Activated CD8-positive, alpha-beta T cell treated with anti-CD3 and anti-CD28 coated beads, Interleukin-2, amount 10 ng/mL, durations not matched to agents 7 days and 5 days (primary cell): ENCODE measurements at regions of chr2 and their contacts with region 1.

Region 1: GRCh38 chr2:85635636-85636035 is 19.6 kb downstream of the USP39 start:
- DNase-seq: no peak
- ATAC-seq: no peak
- H3K4me3 Mint-ChIP-seq: no peak overlapping the region
- H3K27ac Mint-ChIP-seq: no peak overlapping the region
- H3K4me1 Mint-ChIP-seq: peaks cover 6% of the 10 kb centered on the region
- H3K27me3 Mint-ChIP-seq: no peaks in the 10 kb centered on the region

Region 2: GRCh38 chr2:85611705-85612587 is 23.7 kb before region 1 on chr2 and contains the start of gene C2orf68:
- CTCF ChIA-PET with region 1: interaction called, 22 read pairs
- POLR2A ChIA-PET with region 1: interaction called, 6 read pairs
- DNase-seq: peak; percentile 91
- ATAC-seq: peak; percentile 74
- H3K4me3 Mint-ChIP-seq: peak within 1 kb of the TSS; percentile 97
- H3K27ac Mint-ChIP-seq: peak within 1 kb of the TSS; percentile 94
- H3K4me1 Mint-ChIP-seq: peaks cover 35% of the 10 kb centered on the region
- H3K27me3 Mint-ChIP-seq: no peaks in the 10 kb centered on the region
- total RNA-seq, gene C2orf68: 38.9 to 43.4 TPM

Region 3: DNA sequence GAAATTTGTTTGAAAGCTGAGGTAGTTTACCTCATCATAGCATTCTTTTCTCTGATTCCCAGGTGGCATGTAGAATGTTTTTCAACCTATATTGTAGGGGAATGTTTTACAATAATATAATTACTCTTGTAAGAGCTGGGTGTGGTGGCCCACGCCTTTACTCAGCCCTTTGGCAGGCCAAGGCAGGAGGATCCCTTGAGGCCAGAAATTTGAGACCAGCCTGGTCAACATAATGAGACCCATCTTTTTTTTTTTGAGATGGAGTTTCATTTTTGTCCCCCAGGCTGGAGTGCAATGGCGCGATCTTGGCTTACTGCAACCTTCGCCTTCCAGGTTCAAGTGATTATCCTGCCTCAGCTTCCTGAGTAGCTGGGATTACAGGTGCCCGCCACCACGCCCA is 16.0 kb before region 1 on chr2:
- CTCF ChIA-PET with region 1: interaction called, 51 read pairs
- POLR2A ChIA-PET with region 1: interaction called, 6 read pairs
- DNase-seq: no peak
- ATAC-seq: no peak
- H3K4me3 Mint-ChIP-seq: no peak overlapping the region
- H3K27ac Mint-ChIP-seq: no peak overlapping the region
- H3K4me1 Mint-ChIP-seq: peaks cover 36% of the 10 kb centered on the region
- H3K27me3 Mint-ChIP-seq: no peaks in the 10 kb centered on the region

Region 4: GRCh38 chr2:85648619-85649018 is 13.0 kb after region 1 on chr2:
- CTCF ChIA-PET with region 1: interaction called, 86 read pairs
- POLR2A ChIA-PET with region 1: no interaction called
- DNase-seq: peak; percentile 51
- ATAC-seq: peak; percentile 75
- H3K4me3 Mint-ChIP-seq: no peak overlapping the region
- H3K27ac Mint-ChIP-seq: no peak overlapping the region
- H3K4me1 Mint-ChIP-seq: no peaks in the 10 kb centered on the region
- H3K27me3 Mint-ChIP-seq: no peaks in the 10 kb centered on the region

Region 5: GRCh38 chr2:85655961-85656417 is 20.4 kb after region 1 on chr2:
- CTCF ChIA-PET with region 1: interaction called, 86 read pairs
- POLR2A ChIA-PET with region 1: interaction called, 4 read pairs
- DNase-seq: no peak
- ATAC-seq: no peak
- H3K4me3 Mint-ChIP-seq: no peak overlapping the region
- H3K27ac Mint-ChIP-seq: peak overlapping the region; percentile 22
- H3K4me1 Mint-ChIP-seq: peaks cover 25% of the 10 kb centered on the region
- H3K27me3 Mint-ChIP-seq: no peaks in the 10 kb centered on the region